ENCODE measurements at regions of chr20 and their contacts with region 1.

Region 1: DNA sequence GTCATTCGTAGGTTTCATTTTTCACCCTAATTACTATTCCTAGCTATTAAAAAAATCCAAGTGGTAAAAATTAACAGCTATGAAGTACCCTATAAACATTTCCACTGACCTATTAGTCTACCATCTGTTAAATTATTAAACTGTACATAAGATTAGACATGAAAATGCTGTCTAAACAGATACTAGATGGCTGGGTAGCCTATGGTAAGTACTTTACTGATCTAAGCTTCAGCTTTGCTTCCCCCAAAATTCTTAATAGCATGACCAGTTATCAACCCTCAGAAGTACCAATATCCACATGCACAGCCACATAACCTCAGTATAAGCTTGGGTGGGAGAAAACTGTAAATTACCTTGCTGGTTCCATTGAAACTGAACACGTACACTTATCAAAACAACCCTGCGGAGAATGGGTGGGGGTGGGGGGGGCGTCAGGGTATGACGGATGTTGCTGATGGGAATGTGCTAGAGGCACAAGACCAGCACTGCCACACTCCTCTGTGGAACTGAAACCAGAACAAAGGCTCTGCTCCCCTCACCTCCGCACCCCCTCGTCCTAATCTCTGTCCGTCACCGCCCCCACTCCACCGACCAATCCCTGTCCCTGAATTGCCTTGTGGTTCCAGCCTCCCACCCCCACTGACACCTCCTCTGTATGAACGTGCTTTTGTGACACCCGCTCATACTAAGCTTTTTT is 45.3 kb downstream of the B4GALT5 start:
- DNase-seq: no peak
- H3K4me3 Mint-ChIP-seq: peak overlapping the region; percentile 5
- H3K27ac Mint-ChIP-seq: no peak overlapping the region
- H3K4me1 Mint-ChIP-seq: peaks cover 62% of the 10 kb centered on the region
- H3K27me3 Mint-ChIP-seq: peaks cover 3% of the 10 kb centered on the region

Region 2: GRCh38 chr20:49594143-49594930 is 74.0 kb before region 1 on chr20:
- intact Hi-C with region 1: loop called (anchors 2 kb)
- DNase-seq: peak; percentile 76
- H3K4me3 Mint-ChIP-seq: peak overlapping the region; percentile 81
- H3K27ac Mint-ChIP-seq: peak overlapping the region; percentile 99
- H3K4me1 Mint-ChIP-seq: peaks cover 90% of the 10 kb centered on the region
- H3K27me3 Mint-ChIP-seq: no peaks in the 10 kb centered on the region

Region 3: GRCh38 chr20:49620364-49621240 is 47.7 kb before region 1 on chr20:
- intact Hi-C with region 1: loop called (anchors 1 kb)
- DNase-seq: peak; percentile 4
- H3K4me3 Mint-ChIP-seq: no peak overlapping the region
- H3K27ac Mint-ChIP-seq: peak overlapping the region; percentile 16
- H3K4me1 Mint-ChIP-seq: peaks cover 8% of the 10 kb centered on the region
- H3K27me3 Mint-ChIP-seq: peaks cover 10% of the 10 kb centered on the region

Region 4: GRCh38 chr20:49699200-49699992 is 31.1 kb after region 1 on chr20:
- intact Hi-C with region 1: loop called (anchors 1 kb)
- DNase-seq: no peak
- H3K4me3 Mint-ChIP-seq: no peak overlapping the region
- H3K27ac Mint-ChIP-seq: no peak overlapping the region
- H3K4me1 Mint-ChIP-seq: peaks cover 62% of the 10 kb centered on the region
- H3K27me3 Mint-ChIP-seq: no peaks in the 10 kb centered on the region

Region 5: DNA sequence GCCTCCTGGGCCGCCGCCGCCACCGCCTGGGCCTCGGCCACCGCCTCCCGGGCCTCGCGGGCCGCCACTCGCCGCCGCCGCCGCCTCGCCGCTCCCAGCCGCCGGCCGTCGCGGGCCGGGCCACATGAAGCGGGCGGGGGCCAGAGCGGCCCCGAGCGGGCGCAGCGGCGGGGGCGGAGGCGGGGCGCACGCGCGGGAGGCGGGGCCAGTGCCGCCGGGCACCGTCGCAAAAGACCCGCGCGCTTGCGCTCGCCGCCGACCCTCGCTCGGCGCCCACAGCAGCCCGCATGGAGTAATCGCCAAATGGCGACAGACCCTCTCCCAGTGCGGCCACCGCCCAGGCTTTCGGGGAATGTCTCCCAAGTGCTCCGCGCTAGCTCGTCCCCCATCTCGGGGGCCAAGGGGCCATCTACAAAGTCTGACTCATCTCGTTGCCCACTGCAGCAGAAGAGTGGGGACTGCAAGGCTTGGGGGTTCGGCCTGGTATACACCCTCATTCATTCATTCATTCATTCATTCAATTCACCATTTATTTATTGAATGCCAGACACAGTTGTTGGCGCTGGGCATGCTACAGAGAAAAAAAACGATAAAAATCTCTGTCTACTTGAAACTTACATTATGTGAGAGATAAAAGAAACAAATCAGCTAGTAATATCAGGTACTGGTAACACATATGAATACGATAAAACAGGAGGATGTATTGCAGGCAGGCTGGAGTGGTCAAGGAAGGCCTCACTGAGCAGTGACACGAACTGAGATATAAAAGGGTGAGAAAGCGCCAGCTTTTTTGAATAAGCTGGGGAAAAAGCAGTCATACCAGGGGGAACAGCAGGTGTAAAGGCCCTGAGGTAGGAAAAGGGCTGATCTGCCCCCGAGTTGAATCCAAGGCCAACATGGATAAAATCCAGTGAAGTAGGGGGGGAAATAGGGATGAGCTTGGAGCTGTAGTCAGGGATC is 45.7 kb after region 1 on chr20 and contains the start of gene B4GALT5:
- intact Hi-C with region 1: loop called (anchors 1 kb)
- DNase-seq: peak; percentile 60
- H3K4me3 Mint-ChIP-seq: peak within 1 kb of the TSS; percentile 92
- H3K27ac Mint-ChIP-seq: peak within 1 kb of the TSS; percentile 94
- H3K4me1 Mint-ChIP-seq: peaks cover 49% of the 10 kb centered on the region
- H3K27me3 Mint-ChIP-seq: peaks cover 5% of the 10 kb centered on the region
- total RNA-seq, gene B4GALT5: 38.9 and 39.3 TPM in 2 replicates

Region 6: DNA sequence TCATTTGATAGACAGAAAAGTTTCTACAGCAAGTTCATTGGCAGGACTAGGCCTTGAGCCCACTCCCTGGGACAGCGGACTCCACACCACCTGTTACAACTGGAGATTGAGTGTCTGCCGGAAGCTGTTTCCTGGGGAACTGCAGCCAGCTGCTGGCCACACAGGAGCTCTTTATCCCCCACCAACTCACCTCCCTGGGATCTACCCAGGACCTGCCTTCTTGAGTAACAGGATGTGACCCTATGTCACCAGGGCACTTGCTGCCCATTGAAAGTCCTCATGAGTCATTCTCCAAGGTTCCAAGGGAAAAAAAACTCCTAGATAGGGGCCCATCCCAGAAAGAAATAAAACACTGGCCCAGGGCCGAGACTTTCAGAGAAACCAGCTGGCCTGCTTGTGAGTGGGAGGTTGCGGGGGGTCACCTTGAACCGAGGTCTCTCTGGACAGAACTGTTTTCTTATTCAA is 106.9 kb after region 1 on chr20:
- intact Hi-C with region 1: loop called (anchors 2 kb)
- DNase-seq: no peak
- H3K4me3 Mint-ChIP-seq: no peak overlapping the region
- H3K27ac Mint-ChIP-seq: peak overlapping the region; percentile 1
- H3K4me1 Mint-ChIP-seq: peaks cover 32% of the 10 kb centered on the region
- H3K27me3 Mint-ChIP-seq: peaks cover 5% of the 10 kb centered on the region

Measured in activated T-helper 1 cell treated with anti-CD3 and anti-CD28 coated beads, Interleukin-12 subunit alpha, Interleukin-12 subunit beta, Interleukin-2, Interleukin-4 antibody, amounts not matched to agents 30 ng/mL and 10 ng/mL and 1 ng/mL, durations not matched to agents 14 hours and 24 hours and 36 hours (primary cell).